GM12878 (cell line): ENCODE measurements at regions of chr1 and their contacts with region 1.

Region 1: DNA sequence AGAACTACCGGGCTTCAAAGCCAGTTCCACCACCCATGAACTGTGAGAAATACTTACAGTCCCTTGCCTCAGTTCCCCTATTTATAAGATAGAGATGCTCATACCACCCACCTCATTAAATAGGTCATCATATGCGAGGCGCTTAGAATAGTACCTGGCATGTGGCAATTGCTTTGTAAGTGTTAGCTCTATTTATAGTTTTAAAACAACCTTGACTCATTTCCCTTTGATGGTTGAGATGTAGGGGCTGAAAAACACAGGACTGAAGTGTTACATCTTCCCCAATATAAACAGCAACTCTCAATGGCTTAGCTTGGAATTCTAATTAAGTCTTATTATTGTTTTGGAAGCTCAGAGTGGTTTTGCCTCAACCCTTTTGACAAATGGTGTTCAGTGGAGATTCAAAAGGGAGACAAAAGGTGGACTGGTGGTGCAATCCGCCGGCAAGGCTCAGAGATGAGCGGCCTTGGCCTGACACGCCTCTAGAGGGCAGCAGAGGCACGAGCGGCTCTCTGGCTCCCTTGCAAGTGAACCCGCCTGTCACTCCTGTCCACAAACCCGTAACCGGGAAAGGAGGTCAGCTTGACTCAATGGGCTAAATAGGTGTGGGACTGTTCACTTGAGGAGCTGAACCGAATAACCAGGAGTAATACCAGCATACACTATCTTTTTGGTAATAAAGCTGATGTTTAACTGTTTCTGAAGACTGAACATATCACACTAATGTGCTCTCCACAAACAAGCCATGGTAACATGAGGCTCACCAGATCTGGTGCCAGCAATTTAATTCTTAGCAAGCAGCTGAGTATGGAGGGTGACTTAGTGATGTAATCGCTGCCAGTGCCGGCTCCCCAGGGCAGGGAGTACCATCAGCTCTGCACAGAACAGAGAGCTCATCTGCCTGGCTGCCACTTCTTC is 19.5 kb upstream of the SMYD2 start:
- DNase-seq: no peak
- ATAC-seq: peak; percentile 99
- H3K4me3 ChIP-seq: no peak overlapping the region
- H3K27ac ChIP-seq: no peak overlapping the region
- H3K4me1 ChIP-seq: no peaks in the 10 kb centered on the region
- H3K27me3 ChIP-seq: peaks cover 2 to 3% of the 10 kb centered on the region in 2 experiments; a peak in 1 of 4 replicates
- CTCF ChIP-seq: peak; percentile 91 to 98 (median 95); a peak in 5 of 6 replicates
- EP300 ChIP-seq: no peak
- POLR2A ChIP-seq: no peak
- RAD21 ChIP-seq: peak; percentile 87

Region 2: DNA sequence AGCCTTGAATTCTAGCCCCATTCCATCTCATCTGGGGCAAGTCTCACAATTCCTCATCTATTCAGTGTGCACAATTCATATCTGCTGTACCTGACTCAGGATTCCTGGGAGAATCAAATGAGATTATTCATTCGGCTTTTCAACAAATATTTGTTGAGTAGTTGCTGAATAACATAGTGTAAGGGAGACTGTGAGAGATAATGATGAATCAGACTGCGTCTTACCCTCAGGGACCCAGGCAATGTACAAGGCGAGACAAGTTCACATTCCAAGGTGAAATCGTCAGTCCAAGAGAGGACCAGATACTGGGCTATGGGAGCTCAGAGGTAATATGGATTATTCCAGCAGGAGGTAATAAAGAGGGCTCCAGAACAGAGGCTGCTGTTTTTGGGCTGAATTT is 48.3 kb before region 1 on chr1:
- CTCF ChIA-PET with region 1: interaction called, 33 read pairs
- POLR2A ChIA-PET with region 1: no interaction called
- RAD21 ChIA-PET with region 1: interaction called, 13 read pairs
- SMC1A ChIA-PET with region 1: interaction called, 9 read pairs
- in situ Hi-C with region 1: no loop called
- intact Hi-C with region 1: no loop called
- DNase-seq: no peak
- ATAC-seq: no peak
- H3K4me3 ChIP-seq: no peak overlapping the region
- H3K27ac ChIP-seq: no peak overlapping the region
- H3K4me1 ChIP-seq: no peaks in the 10 kb centered on the region
- H3K27me3 ChIP-seq: no peaks in the 10 kb centered on the region; a peak in 1 of 4 replicates
- CTCF ChIP-seq: no peak
- EP300 ChIP-seq: no peak
- POLR2A ChIP-seq: no peak
- RAD21 ChIP-seq: no peak

Region 3: GRCh38 chr1:214251354-214251753 is 10.1 kb before region 1 on chr1:
- CTCF ChIA-PET with region 1: interaction called, 29 read pairs
- POLR2A ChIA-PET with region 1: no interaction called
- RAD21 ChIA-PET with region 1: interaction called, 7 read pairs
- SMC1A ChIA-PET with region 1: interaction called, 13 read pairs
- in situ Hi-C with region 1: no loop called
- intact Hi-C with region 1: no loop called
- DNase-seq: no peak
- ATAC-seq: no peak
- H3K4me3 ChIP-seq: no peak overlapping the region
- H3K27ac ChIP-seq: no peak overlapping the region
- H3K4me1 ChIP-seq: no peaks in the 10 kb centered on the region
- H3K27me3 ChIP-seq: 0 out of 4 replicates have a peak, but pooled peaks cover 0 to 3% of the 10 kb centered on the region in 2 experiments
- CTCF ChIP-seq: no peak
- EP300 ChIP-seq: no peak
- POLR2A ChIP-seq: no peak
- RAD21 ChIP-seq: no peak

Region 4: GRCh38 chr1:214292322-214292721 is 30.9 kb after region 1 on chr1:
- CTCF ChIA-PET with region 1: interaction called, 12 read pairs
- POLR2A ChIA-PET with region 1: no interaction called
- RAD21 ChIA-PET with region 1: interaction called, 4 read pairs
- SMC1A ChIA-PET with region 1: interaction called, 4 read pairs
- in situ Hi-C with region 1: no loop called
- intact Hi-C with region 1: no loop called
- DNase-seq: no peak
- ATAC-seq: no peak
- H3K4me3 ChIP-seq: no peak overlapping the region
- H3K27ac ChIP-seq: no peak overlapping the region
- H3K4me1 ChIP-seq: peaks cover 8% of the 10 kb centered on the region; the same call in 1 of the 2 replicates
- H3K27me3 ChIP-seq: no peaks in the 10 kb centered on the region
- CTCF ChIP-seq: no peak
- EP300 ChIP-seq: no peak
- POLR2A ChIP-seq: no peak
- RAD21 ChIP-seq: no peak

Region 5: GRCh38 chr1:214310777-214311690 is 49.6 kb after region 1 on chr1:
- CTCF ChIA-PET with region 1: interaction called, 12 read pairs
- POLR2A ChIA-PET with region 1: no interaction called
- RAD21 ChIA-PET with region 1: interaction called, 3 read pairs
- SMC1A ChIA-PET with region 1: interaction called, 4 read pairs
- in situ Hi-C with region 1: no loop called
- intact Hi-C with region 1: no loop called
- DNase-seq: no peak
- ATAC-seq: no peak
- H3K4me3 ChIP-seq: peak overlapping the region; percentile 54
- H3K27ac ChIP-seq: no peak overlapping the region
- H3K4me1 ChIP-seq: peaks cover 5% of the 10 kb centered on the region
- H3K27me3 ChIP-seq: no peaks in the 10 kb centered on the region
- CTCF ChIP-seq: no peak
- EP300 ChIP-seq: no peak
- POLR2A ChIP-seq: no peak
- RAD21 ChIP-seq: no peak

Region 6: GRCh38 chr1:214321705-214322453 is 60.4 kb after region 1 on chr1:
- CTCF ChIA-PET with region 1: interaction called, 576 read pairs
- POLR2A ChIA-PET with region 1: interaction called, 3 read pairs
- RAD21 ChIA-PET with region 1: interaction called, 175 read pairs
- SMC1A ChIA-PET with region 1: interaction called, 323 read pairs
- in situ Hi-C with region 1: no loop called
- intact Hi-C with region 1: no loop called
- DNase-seq: peak; percentile 30
- ATAC-seq: peak; percentile 95
- H3K4me3 ChIP-seq: no peak overlapping the region; the same call in 1 of the 2 replicates
- H3K27ac ChIP-seq: no peak overlapping the region
- H3K4me1 ChIP-seq: peaks cover 13% of the 10 kb centered on the region
- H3K27me3 ChIP-seq: no peaks in the 10 kb centered on the region
- CTCF ChIP-seq: no peak
- EP300 ChIP-seq: no peak
- POLR2A ChIP-seq: no peak
- RAD21 ChIP-seq: no peak